ENCODE measurements at regions of chr17 and their contacts with region 1.

Region 1: GRCh38 chr17:50626037-50626574 is 8.6 kb upstream of the ABCC3 start:
- DNase-seq: peak; percentile 88
- ATAC-seq: peak; percentile 75
- H3K4me3 Mint-ChIP-seq: no peak overlapping the region
- H3K27ac Mint-ChIP-seq: no peak overlapping the region
- H3K4me1 Mint-ChIP-seq: peaks cover 37% of the 10 kb centered on the region
- H3K27me3 Mint-ChIP-seq: peaks cover 4% of the 10 kb centered on the region
- CTCF ChIP-seq: peak; percentile 73

Region 2: DNA sequence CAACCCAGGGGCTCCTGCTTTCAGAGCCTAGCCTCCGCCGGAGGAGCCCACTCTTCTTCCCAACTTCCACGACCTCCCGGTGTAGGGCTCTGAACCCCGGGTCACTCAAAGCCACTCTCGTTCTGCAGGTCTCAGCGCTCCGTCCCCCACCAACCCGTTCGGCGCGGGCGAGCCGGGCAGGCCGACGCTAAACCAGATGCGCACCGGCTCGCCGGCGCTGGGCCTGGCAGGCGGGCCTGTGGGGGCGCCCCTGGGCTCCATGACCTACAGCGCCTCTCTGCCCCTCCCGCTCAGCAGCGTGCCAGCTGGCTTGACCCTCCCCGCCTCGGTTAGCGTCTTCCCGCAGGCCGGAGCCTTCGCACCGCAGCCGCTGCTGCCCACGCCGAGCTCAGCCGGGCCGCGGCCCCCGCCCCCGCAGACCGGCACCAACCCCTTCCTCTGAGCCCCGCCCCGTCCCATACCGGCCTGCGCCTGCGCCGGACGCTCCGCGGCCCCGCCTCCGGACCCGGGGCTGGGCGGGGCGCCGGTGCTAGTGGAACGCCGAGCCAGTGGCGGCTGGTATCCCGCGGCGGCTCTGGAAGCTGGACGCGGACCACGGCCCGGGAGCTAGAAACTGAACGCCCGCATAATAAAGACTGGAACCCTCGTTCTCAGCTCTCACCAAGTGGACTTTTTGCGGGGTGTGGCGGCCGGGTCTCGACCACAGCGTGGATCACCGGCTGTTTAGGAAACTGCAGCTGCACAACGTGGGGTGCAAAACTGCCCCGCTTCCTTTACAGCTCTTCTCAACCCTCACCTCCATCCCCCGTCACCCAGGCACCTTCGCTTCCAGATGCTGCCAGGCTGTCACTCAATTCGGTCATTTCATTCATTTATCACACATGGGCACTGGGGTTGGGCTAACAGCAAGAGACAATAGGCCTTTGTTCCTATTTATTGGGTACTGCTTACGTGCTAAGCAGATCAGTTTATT is 84.1 kb before region 1 on chr17:
- CTCF ChIA-PET with region 1: interaction called, 29 read pairs
- POLR2A ChIA-PET with region 1: no interaction called
- DNase-seq: peak; percentile 90
- ATAC-seq: peak; percentile 79
- H3K4me3 Mint-ChIP-seq: peak overlapping the region; percentile 81
- H3K27ac Mint-ChIP-seq: peak overlapping the region; percentile 85
- H3K4me1 Mint-ChIP-seq: peaks cover 28% of the 10 kb centered on the region
- H3K27me3 Mint-ChIP-seq: peaks cover 14% of the 10 kb centered on the region
- CTCF ChIP-seq: no peak

Region 3: GRCh38 chr17:50575581-50576210 is 50.4 kb before region 1 on chr17:
- CTCF ChIA-PET with region 1: interaction called, 14 read pairs
- POLR2A ChIA-PET with region 1: interaction called, 3 read pairs
- DNase-seq: peak; percentile 49
- ATAC-seq: peak; percentile 47
- H3K4me3 Mint-ChIP-seq: no peak overlapping the region
- H3K27ac Mint-ChIP-seq: no peak overlapping the region
- H3K4me1 Mint-ChIP-seq: peaks cover 14% of the 10 kb centered on the region
- H3K27me3 Mint-ChIP-seq: no peaks in the 10 kb centered on the region
- CTCF ChIP-seq: no peak

Region 4: DNA sequence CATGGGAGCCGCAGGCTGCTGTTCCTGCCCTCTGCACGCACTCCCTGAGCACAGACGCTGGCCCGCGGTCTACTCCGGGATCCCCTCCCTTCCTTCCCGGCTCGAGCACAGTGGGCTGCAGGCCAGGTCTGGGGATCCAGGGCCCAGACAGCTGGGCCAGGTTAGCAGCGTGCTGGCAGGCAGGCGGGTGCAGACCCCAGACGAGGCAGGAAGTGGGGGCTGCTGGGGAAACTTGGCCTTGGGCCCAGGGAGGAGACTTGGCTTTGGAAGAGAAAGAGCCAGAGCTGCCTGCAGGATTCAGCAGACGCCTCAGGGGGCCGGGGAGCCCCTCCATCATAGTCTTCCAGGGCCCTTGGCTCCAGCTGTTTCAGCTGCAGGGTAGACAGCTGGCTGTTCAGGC is 21.6 kb before region 1 on chr17:
- CTCF ChIA-PET with region 1: interaction called, 15 read pairs
- POLR2A ChIA-PET with region 1: interaction called, 7 read pairs
- DNase-seq: peak; percentile 42
- ATAC-seq: peak; percentile 61
- H3K4me3 Mint-ChIP-seq: no peak overlapping the region
- H3K27ac Mint-ChIP-seq: no peak overlapping the region
- H3K4me1 Mint-ChIP-seq: peaks cover 17% of the 10 kb centered on the region
- H3K27me3 Mint-ChIP-seq: no peaks in the 10 kb centered on the region
- CTCF ChIP-seq: no peak

Region 5: DNA sequence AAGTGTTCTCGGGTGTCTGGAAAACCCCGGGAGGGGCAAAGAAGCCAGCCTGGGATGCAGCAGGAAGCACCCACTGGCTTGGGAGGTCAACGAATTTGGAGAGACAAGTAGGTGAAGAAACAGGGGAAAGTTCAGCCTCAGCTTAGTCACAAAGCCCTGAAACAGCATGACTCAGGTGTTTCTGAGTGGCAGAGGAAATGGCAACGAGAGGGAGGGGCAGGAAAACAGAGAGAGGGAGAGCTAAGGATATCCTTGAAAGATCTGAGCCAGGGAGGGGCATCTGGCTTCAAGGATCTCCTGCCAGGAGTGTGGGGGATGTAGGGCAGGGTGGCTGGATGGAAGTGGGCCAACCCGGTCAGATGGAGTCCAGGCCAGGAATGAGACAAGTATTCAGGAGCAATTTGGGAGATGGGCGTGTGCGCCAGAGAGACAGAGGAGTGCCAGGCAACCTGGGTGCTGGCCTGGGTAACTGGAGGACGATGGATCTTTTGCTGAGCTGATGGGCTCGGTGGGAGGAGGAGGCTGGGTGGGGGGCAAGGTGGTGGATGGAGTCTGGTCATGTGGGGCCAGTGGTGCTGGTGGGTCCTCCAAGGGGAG is 35.8 kb after region 1 on chr17:
- CTCF ChIA-PET with region 1: interaction called, 14 read pairs
- POLR2A ChIA-PET with region 1: no interaction called
- DNase-seq: no peak
- ATAC-seq: no peak; the same call in 1 of the 2 replicates
- H3K4me3 Mint-ChIP-seq: no peak overlapping the region
- H3K27ac Mint-ChIP-seq: peak overlapping the region; percentile 71
- H3K4me1 Mint-ChIP-seq: peaks cover 16% of the 10 kb centered on the region
- H3K27me3 Mint-ChIP-seq: no peaks in the 10 kb centered on the region; the same call in 1 of the 2 replicates
- CTCF ChIP-seq: no peak

Region 6: DNA sequence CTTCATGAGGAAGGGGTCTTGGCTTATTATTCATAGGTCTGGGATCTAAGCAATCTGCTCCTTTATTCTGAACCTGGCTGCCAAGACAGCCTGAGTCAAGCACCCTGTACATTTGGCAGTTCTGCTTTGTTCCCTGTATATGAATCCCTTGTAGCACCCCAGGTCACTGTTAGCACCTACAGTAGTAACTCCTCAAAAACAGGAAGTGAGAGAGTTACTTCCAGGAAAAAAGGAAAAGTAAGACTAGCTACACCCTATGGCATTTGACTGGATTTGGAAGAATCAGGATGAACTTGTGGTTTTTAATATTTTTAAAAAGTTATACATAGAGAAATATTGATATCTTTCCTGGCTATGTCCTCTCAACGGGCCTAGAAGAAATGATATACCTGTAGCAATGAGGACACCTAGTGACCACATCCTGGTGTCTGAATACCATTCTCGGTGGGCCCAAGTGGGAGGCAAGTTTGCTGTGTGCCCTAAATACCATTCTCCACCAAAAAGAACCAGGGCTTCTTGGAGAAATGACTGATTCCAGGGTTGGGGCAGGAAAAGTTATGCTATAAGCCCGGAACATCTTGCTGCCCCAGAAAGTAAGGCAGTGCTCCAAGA is 71.7 kb after region 1 on chr17:
- CTCF ChIA-PET with region 1: interaction called, 14 read pairs
- POLR2A ChIA-PET with region 1: no interaction called
- DNase-seq: no peak
- ATAC-seq: no peak
- H3K4me3 Mint-ChIP-seq: no peak overlapping the region
- H3K27ac Mint-ChIP-seq: no peak overlapping the region
- H3K4me1 Mint-ChIP-seq: no peaks in the 10 kb centered on the region
- H3K27me3 Mint-ChIP-seq: no peaks in the 10 kb centered on the region
- CTCF ChIP-seq: no peak

Region 7: DNA sequence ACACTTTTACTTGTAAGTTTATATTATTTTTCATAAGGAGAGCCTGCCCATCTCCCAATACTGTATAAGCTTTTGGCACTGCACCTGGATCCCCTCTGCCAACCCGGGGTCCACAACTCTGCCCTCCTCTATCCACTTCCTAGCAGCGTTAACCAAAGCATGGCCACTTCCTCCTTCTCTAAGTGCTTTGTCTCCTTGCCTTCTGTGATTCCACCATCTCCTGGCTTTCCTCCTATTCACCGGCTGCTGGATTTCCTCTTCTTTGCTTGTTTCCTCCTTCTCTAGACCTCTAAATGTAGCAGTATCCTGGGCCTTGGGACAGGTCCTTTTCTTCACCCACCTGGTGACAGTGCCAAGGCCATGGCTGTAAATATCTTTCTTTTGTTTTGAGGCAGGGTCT is 189.3 kb after region 1 on chr17:
- CTCF ChIA-PET with region 1: no interaction called
- POLR2A ChIA-PET with region 1: no interaction called
- DNase-seq: no peak
- ATAC-seq: no peak
- H3K4me3 Mint-ChIP-seq: no peak overlapping the region
- H3K27ac Mint-ChIP-seq: no peak overlapping the region
- H3K4me1 Mint-ChIP-seq: peaks cover 10% of the 10 kb centered on the region
- H3K27me3 Mint-ChIP-seq: no peaks in the 10 kb centered on the region
- CTCF ChIP-seq: no peak